ENCODE measurements at regions of chr11 and their contacts with region 1.

Region 1: GRCh38 chr11:134253188-134253993 is at the starts of genes ACAD8 and THYN1:
- DNase-seq: peak; percentile 98
- H3K4me3 ChIP-seq: peak within 1 kb of the TSS; percentile 61 to 96 (median 73)
- H3K27ac ChIP-seq: peak within 1 kb of the TSS; percentile 20 to 75 (median 73)
- H3K4me1 ChIP-seq: peaks cover 12 to 36% of the 10 kb centered on the region in 2 donors
- H3K27me3 ChIP-seq: no peaks in the 10 kb centered on the region
- CTCF ChIP-seq: peak in 5 of 6 experiments; percentile 10 to 61 (median 39)
- POLR2A ChIP-seq: peak in 1 of 2 donors; percentile 84
- total RNA-seq, gene ACAD8: 57.2 to 130 (median 73.2) TPM
- total RNA-seq, gene THYN1: 42.4 to 77.9 (median 63.8) TPM

Region 2: GRCh38 chr11:134226806-134227325 is 26.5 kb before region 1 on chr11:
- intact Hi-C with region 1: loop called (anchors 2 kb)
- DNase-seq: no peak
- H3K4me3 ChIP-seq: no peak overlapping the region
- H3K27ac ChIP-seq: no peak overlapping the region
- H3K4me1 ChIP-seq: peaks cover 25 to 30% of the 10 kb centered on the region in 2 donors
- H3K27me3 ChIP-seq: no peaks in the 10 kb centered on the region
- CTCF ChIP-seq: no peak
- POLR2A ChIP-seq: no peak

Region 3: DNA sequence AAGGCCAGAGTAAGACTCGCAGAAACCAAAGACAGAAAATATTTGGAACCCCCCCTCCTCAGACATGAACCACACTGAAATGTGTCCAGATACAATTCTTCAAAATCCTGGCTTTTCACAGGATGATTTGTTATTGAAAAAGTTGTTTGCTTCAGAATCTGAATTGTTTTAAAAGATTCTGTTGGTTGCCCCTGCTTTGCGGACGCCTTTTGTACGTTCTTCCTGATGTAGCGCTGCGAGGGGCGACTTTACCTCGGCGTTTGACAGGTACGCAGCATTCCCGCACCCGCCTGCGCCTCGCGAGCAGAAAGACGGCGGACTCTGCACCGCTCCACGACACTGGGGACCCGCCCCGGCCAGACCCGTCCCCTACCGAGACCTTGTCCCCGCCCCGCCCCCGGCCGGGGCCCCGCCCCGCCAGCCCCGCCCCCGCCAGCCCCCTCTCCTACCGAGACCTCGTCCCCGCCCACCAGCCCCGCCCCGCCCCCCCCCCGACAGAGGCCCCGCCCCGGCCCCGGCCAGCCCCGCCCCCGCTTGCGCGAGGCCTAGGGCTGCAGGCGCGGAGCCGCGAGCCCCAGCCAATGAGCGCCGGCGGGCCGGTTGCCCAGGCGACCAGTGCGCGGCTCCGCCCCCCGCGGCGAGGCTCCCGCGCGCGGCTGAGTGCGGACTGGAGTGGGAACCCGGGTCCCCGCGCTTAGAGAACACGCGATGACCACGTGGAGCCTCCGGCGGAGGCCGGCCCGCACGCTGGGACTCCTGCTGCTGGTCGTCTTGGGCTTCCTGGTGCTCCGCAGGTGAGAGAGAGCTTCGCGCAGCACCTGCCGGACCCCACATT is 78.2 kb after region 1 on chr11 and contains the start of gene GLB1L2:
- intact Hi-C with region 1: loop called (anchors 5 kb)
- DNase-seq: peak; percentile 83 to 84
- H3K4me3 ChIP-seq: peak within 1 kb of the TSS; percentile 25 to 55 (median 48)
- H3K27ac ChIP-seq: peak within 1 kb of the TSS in 1 of 3 donors; percentile 21
- H3K4me1 ChIP-seq: peaks cover 6 to 16% of the 10 kb centered on the region in 2 donors
- H3K27me3 ChIP-seq: no peaks in the 10 kb centered on the region
- CTCF ChIP-seq: no peak
- POLR2A ChIP-seq: peak in 1 of 2 donors; percentile 33
- total RNA-seq, gene GLB1L2: 13.4 to 31.6 (median 25.8) TPM